ENCODE measurements at regions of chr11 and their contacts with region 1.

Region 1: DNA sequence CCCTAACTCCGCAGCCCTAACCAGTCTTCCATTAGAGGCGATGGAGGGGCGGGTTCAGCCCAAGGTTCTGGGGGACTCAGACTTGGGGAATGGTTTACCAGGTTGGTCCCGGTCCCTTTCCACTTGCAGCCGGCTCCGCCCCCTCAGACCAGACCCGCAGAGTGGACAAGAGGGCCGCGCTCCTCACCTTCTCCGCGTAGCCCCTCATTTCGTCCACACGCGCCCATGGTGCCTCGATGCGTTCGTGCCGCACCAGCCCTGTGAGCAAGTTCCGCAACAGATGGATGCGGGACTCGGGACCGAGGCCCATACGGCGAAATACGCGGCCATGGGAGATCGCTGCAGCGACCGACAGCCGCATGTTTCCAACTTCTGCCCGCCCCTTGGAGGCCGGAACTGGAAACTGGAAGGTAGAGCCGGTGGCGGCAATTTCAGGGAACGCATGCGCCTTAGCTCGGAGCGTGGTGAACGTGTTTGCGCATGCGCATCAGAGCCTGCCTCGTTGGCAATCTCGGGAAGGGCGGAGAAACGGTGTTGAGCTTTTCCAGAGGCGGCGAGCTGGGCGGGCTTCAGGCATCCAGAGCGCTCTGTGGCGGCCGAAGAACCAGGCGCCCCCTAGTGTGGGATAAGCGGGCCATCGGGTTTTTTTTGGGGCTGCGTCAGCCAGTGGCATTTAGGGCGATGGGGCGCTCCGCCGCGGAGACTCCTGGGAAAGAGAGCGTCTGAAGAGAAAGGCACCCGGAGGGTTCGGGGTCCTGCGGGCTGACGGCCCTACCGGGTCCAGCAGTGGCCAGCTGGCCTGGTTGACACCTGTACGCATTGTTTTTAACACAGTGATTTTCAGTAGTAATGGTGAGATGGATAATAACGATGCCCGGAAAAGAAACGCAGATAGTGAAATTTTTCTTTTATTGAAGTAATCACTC is at the start of gene MRPL17:
- DNase-seq: peak; percentile 100
- ATAC-seq: peak; percentile 98
- total RNA-seq, gene MRPL17: 25.5 TPM

Region 2: DNA sequence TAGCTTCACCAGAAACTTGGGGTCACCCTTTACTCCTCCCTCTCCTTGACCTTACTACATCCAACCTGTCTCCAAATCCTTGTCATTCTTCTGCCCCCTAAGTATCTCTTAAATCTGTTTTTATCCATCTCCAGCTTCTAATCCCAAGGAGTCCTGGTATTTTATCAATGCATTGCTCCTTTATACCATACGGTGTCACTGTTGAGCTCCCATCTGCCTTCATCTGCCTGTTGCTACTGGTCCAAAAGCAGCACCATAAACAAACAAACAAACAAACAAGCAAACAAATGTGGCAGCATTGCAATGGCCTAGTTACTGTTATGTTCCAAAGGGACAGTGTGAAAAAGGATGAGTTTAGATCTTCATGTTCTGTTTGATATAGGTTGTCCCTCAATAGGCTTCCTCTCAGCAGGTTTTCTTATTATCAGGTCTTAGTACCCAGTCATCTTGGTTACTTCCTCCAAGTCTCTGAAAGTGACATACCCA is 151.9 kb before region 1 on chr11:
- intact Hi-C with region 1: loop called (anchors 10 kb)
- DNase-seq: no peak
- ATAC-seq: peak; percentile 80

Region 3: DNA sequence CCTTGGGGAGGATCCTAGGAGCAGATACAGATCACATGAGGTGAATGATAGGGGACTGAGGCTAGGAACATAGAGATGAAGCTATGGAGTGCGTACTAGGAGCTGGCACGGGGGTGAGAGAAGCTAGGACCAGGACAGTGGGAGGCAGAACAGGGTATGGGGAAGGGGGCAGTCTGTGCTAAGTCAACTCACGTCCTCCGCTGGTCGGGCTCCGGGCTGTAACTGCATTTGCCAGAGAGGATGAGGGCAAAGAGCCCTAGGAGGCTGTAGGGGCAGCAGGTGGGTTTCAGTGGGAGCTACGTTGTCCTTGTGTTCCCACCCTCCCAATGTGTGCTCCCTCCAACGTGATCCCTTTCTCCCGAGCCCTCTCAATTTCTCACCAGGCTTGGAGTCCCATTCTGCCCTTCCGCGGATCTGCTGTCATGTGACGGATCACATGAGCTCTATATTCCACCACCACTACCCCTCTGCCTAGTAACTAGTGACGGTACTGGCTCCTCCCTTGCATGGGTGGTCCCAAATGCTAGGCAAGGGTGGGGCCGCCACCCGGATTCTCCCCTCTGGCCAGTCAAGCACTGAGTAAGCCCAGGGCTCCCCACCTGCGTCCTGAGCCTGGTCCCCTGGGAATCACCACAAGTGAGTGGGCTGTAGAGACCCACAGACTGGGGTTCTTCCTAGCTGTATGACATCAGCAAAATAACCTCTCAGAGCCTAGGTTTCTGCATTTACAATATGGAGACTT is 64.0 kb before region 1 on chr11 and contains the start of gene TPP1:
- intact Hi-C with region 1: loop called (anchors 5 kb)
- DNase-seq: peak; percentile 96
- ATAC-seq: peak; percentile 98
- total RNA-seq, gene TPP1: 100 TPM